ENCODE measurements at regions of chr16 and their contacts with region 1.

Region 1: DNA sequence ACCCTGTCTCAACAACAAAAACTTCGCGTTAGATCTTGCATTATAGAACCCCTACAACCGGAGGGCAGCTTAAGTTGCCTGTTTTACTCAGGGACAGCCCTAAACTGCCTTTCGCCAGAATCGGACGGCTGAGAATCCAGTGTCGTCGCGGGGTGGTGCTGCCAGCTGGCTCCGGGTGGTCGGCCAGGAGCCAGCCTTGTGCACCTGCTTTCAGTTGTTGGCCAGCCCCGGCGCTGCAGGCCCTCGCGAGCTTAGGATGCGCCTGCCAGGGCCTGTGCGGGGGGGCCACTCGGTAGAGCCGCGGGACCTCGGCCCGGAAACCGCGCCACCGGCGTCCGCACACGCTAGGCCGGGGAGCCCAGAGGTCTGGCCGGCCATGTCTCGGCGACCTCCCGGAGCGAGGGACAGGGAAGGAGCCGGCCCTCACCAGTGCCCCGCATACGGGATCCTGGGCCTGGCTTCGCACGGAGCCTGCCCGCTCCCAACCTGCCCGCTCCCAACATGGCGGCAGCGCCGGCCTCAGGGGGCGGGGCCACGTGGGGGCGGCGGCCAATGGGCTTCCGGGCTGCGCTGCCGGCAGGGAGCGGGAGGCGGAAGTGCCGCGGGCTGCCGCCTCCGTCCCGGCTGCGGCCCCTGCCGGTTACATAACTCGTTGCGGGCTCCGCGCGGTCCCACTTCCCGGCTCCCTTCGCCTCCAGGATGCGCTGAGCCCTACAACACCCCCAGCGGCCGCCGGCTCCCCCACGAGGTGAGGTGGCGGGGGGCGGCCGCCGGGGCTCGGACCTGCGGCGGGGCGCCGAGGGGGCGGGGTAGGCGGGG is 14.2 kb downstream of the NAA60 start:
- DNase-seq: peak; percentile 95

Region 2: GRCh38 chr16:3029537-3030402 is 427.9 kb before region 1 on chr16:
- intact Hi-C with region 1: no loop called
- DNase-seq: no peak

Region 3: GRCh38 chr16:3400779-3401688 is 56.6 kb before region 1 on chr16 and contains the starts of genes ZNF174 and ZSCAN32:
- intact Hi-C with region 1: loop called (anchors 2 kb)
- DNase-seq: peak; percentile 100
- total RNA-seq, gene ZNF174: 9.2 TPM
- total RNA-seq, gene ZSCAN32: 7.2 TPM

Region 4: GRCh38 chr16:3503523-3503922 is 45.9 kb after region 1 on chr16:
- intact Hi-C with region 1: loop called (anchors 5 kb)
- DNase-seq: peak; percentile 41

Region 5: DNA sequence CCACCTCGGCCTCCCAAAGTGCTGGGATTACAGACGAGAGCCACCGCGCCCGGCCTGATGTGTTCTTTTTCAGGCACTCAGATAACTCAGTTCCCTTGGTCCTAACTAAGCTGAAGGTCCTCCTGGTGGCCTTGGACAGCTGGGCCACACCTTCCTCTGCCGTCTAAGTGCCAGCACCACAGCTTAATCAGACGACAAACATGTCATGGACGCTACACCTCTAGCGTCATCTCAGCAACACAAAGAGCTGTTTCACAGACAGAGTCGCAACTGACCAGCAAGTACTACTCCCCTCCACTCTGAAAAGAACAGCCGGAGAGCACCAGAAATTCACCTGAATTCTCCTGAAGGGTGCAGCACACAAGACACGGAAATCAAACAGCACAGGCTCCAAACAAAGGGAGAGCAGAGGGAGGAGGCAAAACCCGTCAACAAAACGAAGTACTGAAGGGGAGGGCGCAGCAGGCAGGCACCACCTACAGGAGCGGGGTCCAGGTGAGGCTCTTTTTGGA is 255.3 kb after region 1 on chr16:
- intact Hi-C with region 1: no loop called
- DNase-seq: no peak

Measured in cardiac septum (tissue), 1 donor.